HCT116 (cell line): ENCODE measurements at regions of chr16 and their contacts with region 1.

Region 1: GRCh38 chr16:85253084-85253941 is 141.0 kb upstream of the CIBAR2 start:
- DNase-seq: no peak
- ATAC-seq: peak; percentile 96
- H3K4me3 ChIP-seq: no peak overlapping the region
- H3K27ac ChIP-seq: no peak overlapping the region; the same call in 1 of the 2 replicates
- H3K4me1 ChIP-seq: peaks cover 9 to 23% of the 10 kb centered on the region in 2 experiments
- H3K27me3 ChIP-seq: no peaks in the 10 kb centered on the region
- CTCF ChIP-seq: peak; percentile 86 to 100 (median 100)
- POLR2A ChIP-seq: no peak
- RAD21 ChIP-seq: peak; percentile 63

Region 2: GRCh38 chr16:85027349-85027957 is 225.9 kb before region 1 on chr16 and contains the start of gene KIAA0513:
- CTCF ChIA-PET with region 1: no interaction called
- POLR2A ChIA-PET with region 1: no interaction called
- RAD21 ChIA-PET with region 1: no interaction called
- intact Hi-C with region 1: no loop called
- DNase-seq: peak; percentile 86
- ATAC-seq: peak; percentile 87
- H3K4me3 ChIP-seq: peak within 1 kb of the TSS; percentile 56 to 82
- H3K27ac ChIP-seq: peak within 1 kb of the TSS; percentile 21
- H3K4me1 ChIP-seq: peaks cover 28 to 39% of the 10 kb centered on the region in 2 experiments
- H3K27me3 ChIP-seq: peaks cover 9% of the 10 kb centered on the region; the same call in 1 of the 2 replicates
- CTCF ChIP-seq: peak in 1 of 3 experiments; percentile 18; a peak in 2 of 6 replicates
- POLR2A ChIP-seq: peak; percentile 93
- RAD21 ChIP-seq: no peak
- total RNA-seq, gene KIAA0513: 6.6 TPM

Region 3: GRCh38 chr16:85266857-85267256 is 13.5 kb after region 1 on chr16:
- CTCF ChIA-PET with region 1: interaction called, 10 read pairs
- POLR2A ChIA-PET with region 1: no interaction called
- RAD21 ChIA-PET with region 1: no interaction called
- intact Hi-C with region 1: no loop called
- DNase-seq: no peak
- ATAC-seq: no peak
- H3K4me3 ChIP-seq: no peak overlapping the region
- H3K27ac ChIP-seq: no peak overlapping the region
- H3K4me1 ChIP-seq: no peaks in the 10 kb centered on the region
- H3K27me3 ChIP-seq: no peaks in the 10 kb centered on the region
- CTCF ChIP-seq: no peak
- POLR2A ChIP-seq: no peak
- RAD21 ChIP-seq: no peak

Region 4: DNA sequence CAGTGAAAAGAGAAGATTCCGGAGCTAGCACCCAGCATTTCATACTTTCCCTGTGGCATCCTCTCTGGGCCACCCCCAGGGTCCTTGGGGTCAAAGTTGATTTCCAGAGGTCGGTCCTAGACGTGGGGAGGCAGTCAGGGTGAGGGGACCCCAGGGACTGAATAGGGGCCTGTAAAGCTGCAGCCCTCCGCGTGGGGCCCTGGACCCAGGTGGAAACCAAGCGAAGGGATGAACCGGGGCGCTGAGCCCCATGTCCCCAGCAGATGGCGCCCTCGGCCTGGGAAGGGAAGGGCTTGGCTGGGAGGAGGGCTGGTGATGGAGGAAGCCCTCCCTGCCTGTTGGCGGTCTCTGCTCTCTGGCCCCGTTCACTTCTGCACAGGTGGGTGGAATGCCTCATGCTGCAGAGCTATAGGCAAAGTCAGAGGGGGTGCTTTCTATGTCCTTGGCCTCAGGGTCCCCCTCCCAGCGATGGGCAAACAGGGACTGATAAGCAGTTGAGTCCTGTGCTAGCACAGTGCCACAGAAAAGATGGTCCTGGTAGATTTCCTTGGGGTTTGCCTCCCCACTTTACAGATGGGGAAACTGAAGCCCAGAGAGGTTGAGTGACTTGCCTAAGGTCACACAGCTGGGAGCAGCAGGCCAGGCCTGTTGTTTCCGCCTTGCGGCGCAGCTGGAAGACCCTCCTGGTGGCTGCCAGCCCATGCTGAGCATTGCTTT is 22.4 kb after region 1 on chr16:
- CTCF ChIA-PET with region 1: interaction called, 11 read pairs
- POLR2A ChIA-PET with region 1: no interaction called
- RAD21 ChIA-PET with region 1: no interaction called
- intact Hi-C with region 1: no loop called
- DNase-seq: peak; percentile 19
- ATAC-seq: peak; percentile 96
- H3K4me3 ChIP-seq: no peak overlapping the region
- H3K27ac ChIP-seq: no peak overlapping the region
- H3K4me1 ChIP-seq: no peaks in the 10 kb centered on the region
- H3K27me3 ChIP-seq: no peaks in the 10 kb centered on the region
- CTCF ChIP-seq: peak; percentile 91 to 100 (median 99)
- POLR2A ChIP-seq: no peak
- RAD21 ChIP-seq: peak; percentile 96